Heart left ventricle (tissue), 16 donors: ENCODE measurements at regions of chr20 and their contacts with region 1.

Region 1: GRCh38 chr20:19995220-19995863 is 21.8 kb upstream of the NAA20 start:
- DNase-seq: no peak
- ATAC-seq: peak in 3 of 4 donors; percentile 15 to 37 (median 26)
- H3K4me3 ChIP-seq: no peak overlapping the region
- H3K27ac ChIP-seq: peak overlapping the region in 9 of 12 donors; percentile 64 to 84 (median 73)
- H3K4me1 ChIP-seq: peaks cover 27 to 97% (median 79%) of the 10 kb centered on the region in 12 donors
- H3K27me3 ChIP-seq: no peaks in the 10 kb centered on the region
- CTCF ChIP-seq: peak; percentile 68 to 86 (median 79)
- POLR2A ChIP-seq: no peak

Region 2: DNA sequence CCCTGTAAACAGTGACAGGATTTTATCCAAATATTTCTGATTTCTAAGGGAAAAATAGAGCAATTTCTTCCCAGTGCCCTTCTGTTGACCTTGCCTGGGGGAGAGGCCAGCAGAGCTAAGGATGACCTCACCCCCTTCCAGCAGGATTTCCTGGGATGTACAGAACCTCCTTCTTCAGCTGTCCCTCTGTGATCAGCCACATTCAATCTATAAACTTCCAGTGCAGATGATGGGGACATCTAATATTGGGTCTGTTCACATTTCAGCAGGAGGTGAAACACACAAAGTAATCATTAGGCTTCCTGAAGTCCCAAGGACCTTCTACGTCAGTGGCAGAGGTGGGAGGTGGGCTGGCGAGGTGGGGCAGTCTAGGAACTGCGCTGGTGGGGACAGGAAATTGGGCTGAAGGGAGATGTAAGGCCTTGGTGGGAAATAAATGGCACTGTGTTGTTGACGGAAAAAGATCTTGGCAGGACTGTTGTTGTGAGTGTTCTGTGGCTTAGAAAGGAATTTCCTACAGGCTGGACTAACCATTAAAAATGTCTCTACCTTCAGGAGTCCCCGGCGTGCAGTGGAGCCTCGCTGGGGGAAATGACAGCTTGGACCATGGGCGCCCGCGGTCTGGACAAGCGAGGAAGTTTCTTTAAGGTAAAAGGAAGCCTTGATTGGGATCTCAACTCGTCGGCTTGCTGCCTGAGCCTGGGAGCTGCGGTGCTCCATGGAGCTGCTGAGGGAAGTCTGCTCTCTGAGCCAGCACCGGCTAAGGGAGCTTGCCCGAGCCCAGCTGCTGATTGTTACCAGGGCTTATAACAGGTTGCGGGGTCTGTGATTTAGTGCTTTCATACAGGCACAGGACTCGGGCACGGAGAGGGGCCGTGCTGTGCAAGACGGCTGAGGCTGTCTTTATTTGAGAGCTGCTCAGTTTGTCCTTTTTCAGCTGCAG is 106.1 kb before region 1 on chr20:
- intact Hi-C with region 1: loop called in 5 of 10 experiments (anchors 5 kb)
- DNase-seq: peak; percentile 71 to 83 (median 76)
- ATAC-seq: peak; percentile 65 to 85 (median 74)
- H3K4me3 ChIP-seq: peak overlapping the region; percentile 3 to 61 (median 52)
- H3K27ac ChIP-seq: peak overlapping the region; percentile 71 to 97 (median 89)
- H3K4me1 ChIP-seq: peaks cover 10 to 86% (median 65%) of the 10 kb centered on the region in 12 donors
- H3K27me3 ChIP-seq: no peaks in the 10 kb centered on the region
- CTCF ChIP-seq: no peak
- POLR2A ChIP-seq: no peak

Region 3: GRCh38 chr20:19909725-19910124 is 85.6 kb before region 1 on chr20:
- intact Hi-C with region 1: loop called in 4 of 10 experiments (anchors 5 to 10 kb)
- DNase-seq: peak; percentile 79 to 90 (median 86)
- ATAC-seq: peak; percentile 66 to 95 (median 88)
- H3K4me3 ChIP-seq: no peak overlapping the region
- H3K27ac ChIP-seq: peak overlapping the region; percentile 43 to 80 (median 62)
- H3K4me1 ChIP-seq: peaks cover 3 to 75% (median 53%) of the 10 kb centered on the region in 12 donors
- H3K27me3 ChIP-seq: no peaks in the 10 kb centered on the region
- CTCF ChIP-seq: no peak
- POLR2A ChIP-seq: no peak

Region 4: DNA sequence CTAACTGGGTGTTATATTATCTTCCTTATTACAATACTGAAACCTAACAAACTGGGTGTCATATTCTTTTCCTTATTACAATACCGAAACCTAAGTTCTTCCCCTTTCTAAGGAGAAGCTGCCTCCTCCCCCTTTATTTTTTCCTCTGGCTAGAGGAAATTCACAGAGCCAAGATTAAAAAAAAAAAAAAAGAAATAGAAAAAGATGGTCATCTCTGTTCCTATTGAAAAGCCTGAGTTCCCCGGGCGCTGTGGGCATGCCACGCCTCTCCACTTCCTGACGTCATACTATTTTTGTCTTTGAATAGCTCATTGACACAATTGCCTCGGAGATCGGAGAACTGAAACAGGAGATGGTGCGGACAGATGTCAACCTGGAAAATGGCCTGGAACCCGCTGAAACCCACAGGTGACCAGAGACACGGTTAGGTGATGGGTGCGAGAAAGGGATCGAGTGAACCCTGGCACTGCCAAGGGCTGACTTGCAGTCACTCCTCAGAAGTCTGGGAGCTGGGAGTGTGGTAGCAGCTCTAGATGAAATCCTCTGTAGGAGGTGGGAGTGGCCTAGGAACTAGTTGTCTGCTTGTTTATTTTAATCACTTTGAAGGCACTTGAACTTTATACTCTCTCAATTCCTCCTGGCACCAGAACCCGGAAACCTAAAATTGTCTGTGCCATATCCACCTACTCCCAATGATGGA is 60.4 kb before region 1 on chr20:
- intact Hi-C with region 1: loop called in 1 of 10 experiments (anchors 5 kb)
- DNase-seq: peak in 4 of 5 donors; percentile 69 to 82 (median 77)
- ATAC-seq: peak; percentile 55 to 79 (median 62)
- H3K4me3 ChIP-seq: peak overlapping the region in 9 of 12 donors; percentile 25 to 55 (median 40)
- H3K27ac ChIP-seq: peak overlapping the region; percentile 7 to 90 (median 78)
- H3K4me1 ChIP-seq: peaks cover 7 to 94% (median 66%) of the 10 kb centered on the region in 12 donors
- H3K27me3 ChIP-seq: no peaks in the 10 kb centered on the region
- CTCF ChIP-seq: no peak
- POLR2A ChIP-seq: peak in 1 of 2 donors; percentile 24

Region 5: DNA sequence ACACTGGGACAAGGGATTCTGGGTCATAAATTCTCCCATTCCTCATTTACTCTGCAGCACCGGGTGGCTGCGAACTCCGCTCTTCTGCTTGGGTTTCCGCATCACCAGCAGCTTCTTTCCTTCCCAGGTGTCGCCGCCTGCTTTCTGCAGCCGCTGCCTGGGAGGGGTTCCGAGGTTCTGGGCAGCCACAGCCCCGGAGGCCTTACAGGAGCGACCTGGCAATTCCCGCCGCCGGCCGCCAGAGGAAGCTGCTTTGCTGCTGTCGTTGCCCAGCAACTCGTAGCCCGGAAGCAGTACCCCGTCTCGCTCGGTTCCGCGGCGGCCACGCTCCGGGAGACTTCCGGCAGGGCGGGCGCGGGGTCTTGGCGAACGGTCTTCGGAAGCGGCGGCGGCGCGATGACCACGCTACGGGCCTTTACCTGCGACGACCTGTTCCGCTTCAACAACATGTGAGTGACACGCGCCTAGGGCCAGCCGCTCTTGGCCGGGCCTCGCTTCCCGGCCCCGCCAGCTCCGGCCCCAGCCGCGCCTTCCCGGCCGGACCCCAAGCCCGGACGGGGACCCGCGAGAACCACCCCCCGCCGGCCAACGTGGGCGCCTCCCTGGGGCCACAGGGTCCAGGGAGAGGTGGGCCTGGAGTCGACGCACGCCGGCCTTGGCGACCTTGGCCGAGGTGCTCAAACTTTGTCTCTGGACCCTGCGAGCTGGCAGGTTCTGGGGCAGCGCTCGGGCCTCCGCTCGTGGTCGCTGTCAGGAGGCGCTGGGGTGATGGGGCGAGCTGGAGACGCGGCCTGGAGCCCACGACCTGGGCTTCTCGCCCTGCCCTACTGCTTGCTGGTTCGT is 21.9 kb after region 1 on chr20 and contains the start of gene NAA20:
- intact Hi-C with region 1: no loop called
- DNase-seq: peak; percentile 95 to 96 (median 95)
- ATAC-seq: peak; percentile 96 to 99 (median 99)
- H3K4me3 ChIP-seq: peak within 1 kb of the TSS; percentile 71 to 99 (median 82)
- H3K27ac ChIP-seq: peak within 1 kb of the TSS; percentile 14 to 85 (median 76)
- H3K4me1 ChIP-seq: peaks cover 0 to 61% (median 28%) of the 10 kb centered on the region in 12 donors
- H3K27me3 ChIP-seq: no peaks in the 10 kb centered on the region
- CTCF ChIP-seq: peak; percentile 56 to 89 (median 79)
- POLR2A ChIP-seq: peak in 1 of 2 donors; percentile 49
- total RNA-seq, gene NAA20: 36.0 to 79.8 (median 59.1) TPM